Heart right ventricle (tissue), 16 donors: ENCODE measurements at regions of chr4 and their contacts with region 1.

Region 1: GRCh38 chr4:2630556-2631273 is 94.3 kb downstream of the FAM193A start:
- DNase-seq: no peak
- ATAC-seq: no peak
- H3K4me3 ChIP-seq: no peak overlapping the region
- H3K27ac ChIP-seq: no peak overlapping the region
- H3K4me1 ChIP-seq: peaks cover 0 to 28% (median 6%) of the 10 kb centered on the region in 9 donors
- H3K27me3 ChIP-seq: no peaks in the 10 kb centered on the region
- CTCF ChIP-seq: no peak

Region 2: GRCh38 chr4:1992468-1993168 is 638.1 kb before region 1 on chr4:
- intact Hi-C with region 1: loop called in 1 of 10 experiments (anchors 10 kb)
- DNase-seq: no peak
- ATAC-seq: peak in 6 of 8 donors; percentile 19 to 57 (median 41)
- H3K4me3 ChIP-seq: peak overlapping the region in 1 of 10 donors; percentile 7
- H3K27ac ChIP-seq: no peak overlapping the region
- H3K4me1 ChIP-seq: peaks cover 0 to 10% (median 0%) of the 10 kb centered on the region in 9 donors
- H3K27me3 ChIP-seq: no peaks in the 10 kb centered on the region
- CTCF ChIP-seq: peak in 2 of 9 donors; percentile 3 to 14

Region 3: DNA sequence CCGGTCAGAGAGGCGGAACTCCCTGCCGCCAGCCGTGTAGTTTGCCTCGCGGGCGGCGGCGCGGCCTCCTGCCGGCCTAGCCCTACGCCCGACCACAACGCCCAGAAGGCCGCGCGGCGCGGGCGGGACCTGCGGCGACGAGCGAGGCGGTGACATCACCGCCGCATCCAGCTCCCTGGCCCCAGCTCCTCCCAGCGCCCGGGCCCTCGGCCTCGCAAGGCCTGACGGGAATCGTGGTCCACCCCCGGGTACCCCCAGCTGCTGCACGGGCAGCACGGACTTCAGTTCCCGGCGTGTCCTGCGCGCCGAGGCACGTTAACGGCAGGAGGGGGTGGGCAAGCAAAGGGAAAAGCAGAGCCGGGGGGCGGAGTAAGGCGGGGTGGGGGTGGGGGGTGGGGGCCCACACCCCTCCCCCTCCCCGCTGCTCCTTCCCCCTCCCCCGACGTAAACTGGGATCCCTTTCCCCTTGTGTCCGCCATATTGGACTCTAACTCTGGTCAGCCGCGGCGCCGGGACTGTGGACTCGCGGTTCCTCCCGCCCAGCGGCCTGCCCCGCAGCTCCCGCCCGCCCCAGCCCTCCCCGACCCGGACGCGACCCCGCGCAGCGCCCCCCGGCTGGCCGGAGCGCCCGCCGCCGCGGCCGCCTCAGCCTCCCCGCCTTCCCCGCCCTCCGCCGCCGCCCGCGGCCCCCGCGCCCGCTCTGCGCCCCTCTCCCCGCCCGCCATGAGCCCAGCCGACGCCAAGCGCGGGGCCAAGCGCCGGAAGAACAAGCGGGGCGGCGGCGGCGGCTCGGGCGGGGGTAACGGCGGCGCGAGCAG is 94.3 kb before region 1 on chr4 and contains the start of gene FAM193A:
- intact Hi-C with region 1: loop called in 1 of 10 experiments (anchors 5 kb)
- DNase-seq: peak; percentile 99
- ATAC-seq: peak; percentile 97 to 99 (median 98)
- H3K4me3 ChIP-seq: peak within 1 kb of the TSS; percentile 82 to 98 (median 96)
- H3K27ac ChIP-seq: peak within 1 kb of the TSS; percentile 87 to 98 (median 98)
- H3K4me1 ChIP-seq: peaks cover 10 to 39% (median 32%) of the 10 kb centered on the region in 9 donors
- H3K27me3 ChIP-seq: no peaks in the 10 kb centered on the region
- CTCF ChIP-seq: no peak
- total RNA-seq, gene FAM193A: 12.6 to 20.6 (median 16.3) TPM